ENCODE measurements at regions of chr1 and their contacts with region 1.

Region 1: DNA sequence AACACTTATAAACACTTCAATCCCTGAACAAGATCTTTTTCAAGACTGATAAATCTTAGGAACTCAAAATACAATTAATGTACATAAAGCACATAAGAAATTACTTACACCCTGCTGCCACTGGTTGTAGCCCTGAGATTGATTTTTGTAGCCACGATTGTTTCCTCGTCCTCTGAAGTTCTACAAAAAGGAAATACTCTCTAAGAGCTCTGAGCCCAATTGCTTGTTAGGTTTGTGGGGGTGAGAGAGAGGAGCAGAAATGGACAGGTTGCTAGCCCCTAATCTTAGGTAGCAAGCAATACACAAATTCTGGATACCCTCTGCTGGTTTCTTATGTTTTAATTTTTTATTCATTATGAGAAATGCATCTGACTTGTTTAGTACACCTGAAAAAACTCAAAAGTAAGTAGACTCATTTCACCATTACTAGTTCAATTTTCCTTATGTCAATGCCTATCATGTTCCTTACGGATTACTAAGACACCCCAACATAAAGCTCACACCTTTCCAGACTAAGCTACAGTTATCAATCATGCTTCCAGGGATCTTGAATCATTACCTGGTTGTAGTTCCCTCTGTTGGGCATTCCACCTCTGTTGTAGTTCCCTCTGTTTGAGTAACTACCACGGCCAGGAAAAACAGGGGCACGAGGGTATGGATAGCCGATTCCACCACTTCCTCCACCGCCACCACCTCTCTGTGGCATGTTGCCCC is 9.3 kb downstream of the HNRNPU start:
- DNase-seq: no peak
- ATAC-seq: peak in 3 of 4 experiments; percentile 36 to 57 (median 40)
- H3K4me3 ChIP-seq: no peak overlapping the region
- H3K4me3 Mint-ChIP-seq: peak overlapping the region; percentile 43 to 91 (median 47)
- H3K27ac ChIP-seq: peak overlapping the region; percentile 57
- H3K27ac Mint-ChIP-seq: peak overlapping the region; percentile 90
- H3K4me1 ChIP-seq: peaks cover 20 to 59% of the 10 kb centered on the region in 2 experiments
- H3K4me1 Mint-ChIP-seq: peaks cover 93 to 95% (median 95%) of the 10 kb centered on the region in 3 donors
- H3K27me3 ChIP-seq: no peaks in the 10 kb centered on the region
- H3K27me3 Mint-ChIP-seq: no peaks in the 10 kb centered on the region

Region 2: GRCh38 chr1:244409701-244410100 is 445.3 kb before region 1 on chr1:
- CTCF ChIA-PET with region 1: no interaction called
- POLR2A ChIA-PET with region 1: no interaction called
- DNase-seq: no peak
- ATAC-seq: no peak
- H3K4me3 ChIP-seq: no peak overlapping the region
- H3K4me3 Mint-ChIP-seq: no peak overlapping the region
- H3K27ac ChIP-seq: no peak overlapping the region
- H3K27ac Mint-ChIP-seq: no peak overlapping the region
- H3K4me1 ChIP-seq: no peaks in the 10 kb centered on the region
- H3K4me1 Mint-ChIP-seq: no peaks in the 10 kb centered on the region
- H3K27me3 ChIP-seq: no peaks in the 10 kb centered on the region
- H3K27me3 Mint-ChIP-seq: no peaks in the 10 kb centered on the region

Region 3: DNA sequence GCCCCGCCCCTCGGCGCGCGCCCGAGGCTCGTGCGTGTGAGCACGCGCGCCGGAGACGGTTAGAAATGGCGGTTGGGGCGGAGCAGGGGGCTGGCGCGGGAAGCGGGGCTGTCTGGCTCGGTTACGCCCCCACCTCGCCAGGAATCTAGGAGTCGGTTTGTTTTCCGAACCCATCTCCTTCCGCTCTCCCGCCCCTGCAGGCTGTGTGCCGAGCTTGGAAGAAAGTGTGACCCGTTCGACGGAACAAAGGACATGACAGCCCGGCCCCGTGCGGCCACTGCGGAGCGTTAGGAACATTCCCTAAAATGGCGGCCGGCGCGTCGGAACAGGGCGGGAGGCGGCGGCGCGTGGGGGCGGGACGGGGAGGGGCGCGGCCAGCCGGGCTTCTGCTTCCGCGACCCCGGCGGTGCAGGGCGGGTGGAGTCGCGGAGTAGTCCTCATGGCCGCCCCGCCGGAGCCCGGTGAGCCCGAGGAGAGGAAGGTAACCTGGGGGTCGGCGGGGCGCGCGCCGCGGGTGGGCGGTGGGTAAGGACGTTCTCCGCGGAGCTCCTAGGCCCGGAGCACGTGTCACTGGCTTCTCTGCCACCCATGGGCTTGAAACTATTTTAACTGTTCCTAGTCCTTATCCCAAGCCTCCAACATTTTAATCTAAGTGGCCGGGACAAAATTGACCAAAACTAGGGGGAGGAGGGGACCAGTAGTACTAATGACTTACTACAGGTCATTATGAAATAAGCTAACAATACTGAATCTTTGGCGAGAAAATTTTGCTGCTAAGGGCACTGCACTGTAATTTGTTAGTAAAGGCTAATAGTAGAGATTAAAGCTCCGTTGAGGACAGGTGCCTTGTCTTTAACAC is 19.5 kb before region 1 on chr1 and contains the start of gene COX20:
- CTCF ChIA-PET with region 1: interaction called, 3 to 14 read pairs
- POLR2A ChIA-PET with region 1: interaction called, 10 to 45 read pairs
- DNase-seq: peak; percentile 73 to 94 (median 86)
- ATAC-seq: peak; percentile 67 to 77 (median 72)
- H3K4me3 ChIP-seq: peak within 1 kb of the TSS; percentile 88 to 96
- H3K4me3 Mint-ChIP-seq: peak within 1 kb of the TSS; percentile 86 to 95 (median 86)
- H3K27ac ChIP-seq: peak within 1 kb of the TSS; percentile 91
- H3K27ac Mint-ChIP-seq: peak within 1 kb of the TSS; percentile 99 to 100
- H3K4me1 ChIP-seq: peaks cover 16 to 31% of the 10 kb centered on the region in 2 experiments
- H3K4me1 Mint-ChIP-seq: peaks cover 47 to 58% (median 52%) of the 10 kb centered on the region in 3 donors
- H3K27me3 ChIP-seq: no peaks in the 10 kb centered on the region
- H3K27me3 Mint-ChIP-seq: no peaks in the 10 kb centered on the region
- total RNA-seq, gene COX20: 17.0 to 32.0 (median 27.5) TPM

Region 4: DNA sequence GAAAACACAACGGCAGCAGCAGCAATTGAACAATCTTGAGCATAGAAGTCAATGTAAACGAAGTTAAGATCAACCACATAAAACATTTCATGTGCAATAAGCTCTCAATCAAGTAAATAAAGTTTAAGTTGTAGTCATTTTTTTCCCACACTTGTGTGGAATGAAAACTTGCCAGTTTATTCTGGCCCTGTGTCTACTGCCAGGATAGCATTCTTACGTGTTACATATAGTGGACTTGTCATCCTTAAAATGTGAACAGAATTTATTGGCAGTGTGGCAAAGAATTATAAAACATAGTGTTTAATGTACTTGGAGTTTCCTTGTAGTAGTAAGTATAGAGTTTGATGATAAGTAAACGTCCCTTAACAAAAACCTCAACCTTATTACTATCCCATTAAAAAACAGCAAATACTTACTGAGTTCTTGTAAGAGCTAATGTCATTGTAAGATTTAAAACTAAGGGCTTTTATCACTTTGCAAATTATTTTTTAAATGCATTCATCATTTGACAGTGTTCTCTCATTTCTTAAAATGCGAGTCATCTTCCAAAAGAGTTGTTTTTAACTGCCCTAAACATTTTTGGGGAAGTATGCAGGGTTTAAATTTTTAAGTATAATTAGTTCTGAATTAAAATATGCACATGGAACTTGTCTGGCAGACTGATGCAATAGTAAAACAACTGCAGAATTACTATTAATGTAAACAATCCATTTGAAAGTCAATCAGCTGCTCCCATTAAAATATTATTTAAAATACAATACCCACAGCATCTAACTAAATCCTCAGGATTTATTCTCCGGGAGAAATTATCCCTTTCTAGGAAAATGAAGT is 11.7 kb before region 1 on chr1:
- CTCF ChIA-PET with region 1: interaction called, 3 to 4 read pairs
- POLR2A ChIA-PET with region 1: interaction called, 13 to 47 read pairs
- DNase-seq: no peak
- ATAC-seq: no peak
- H3K4me3 ChIP-seq: no peak overlapping the region
- H3K4me3 Mint-ChIP-seq: no peak overlapping the region
- H3K27ac ChIP-seq: no peak overlapping the region
- H3K27ac Mint-ChIP-seq: peak overlapping the region; percentile 36 to 68
- H3K4me1 ChIP-seq: peaks cover 10 to 12% of the 10 kb centered on the region in 2 experiments
- H3K4me1 Mint-ChIP-seq: peaks cover 67 to 75% (median 69%) of the 10 kb centered on the region in 3 donors
- H3K27me3 ChIP-seq: no peaks in the 10 kb centered on the region
- H3K27me3 Mint-ChIP-seq: no peaks in the 10 kb centered on the region

Region 5: GRCh38 chr1:244980605-244981004 is 125.6 kb after region 1 on chr1:
- CTCF ChIA-PET with region 1: interaction called in 1 of 2 experiments, 11 read pairs
- POLR2A ChIA-PET with region 1: interaction called in 1 of 2 experiments, 5 read pairs
- DNase-seq: no peak
- ATAC-seq: no peak
- H3K4me3 ChIP-seq: no peak overlapping the region
- H3K4me3 Mint-ChIP-seq: no peak overlapping the region
- H3K27ac ChIP-seq: no peak overlapping the region
- H3K27ac Mint-ChIP-seq: no peak overlapping the region
- H3K4me1 ChIP-seq: no peaks in the 10 kb centered on the region
- H3K4me1 Mint-ChIP-seq: no peaks in the 10 kb centered on the region
- H3K27me3 ChIP-seq: no peaks in the 10 kb centered on the region
- H3K27me3 Mint-ChIP-seq: no peaks in the 10 kb centered on the region

Measured in T-cell (primary cell).